ENCODE measurements at regions of chr5 and their contacts with region 1.

Region 1: GRCh38 chr5:144390133-144390532 is 219.5 kb downstream of the KCTD16 start:
- DNase-seq: peak; percentile 41
- H3K27ac ChIP-seq: no peak overlapping the region
- CTCF ChIP-seq: no peak

Region 2: GRCh38 chr5:144203750-144204596 is 186.2 kb before region 1 on chr5:
- CTCF ChIA-PET with region 1: interaction called, 19 read pairs
- POLR2A ChIA-PET with region 1: no interaction called
- DNase-seq: peak; percentile 49
- H3K27ac ChIP-seq: no peak overlapping the region
- CTCF ChIP-seq: peak; percentile 97

Measured in RWPE1 (cell line).